ENCODE measurements at regions of chr6 and their contacts with region 1.

Region 1: GRCh38 chr6:150016324-150017185 is 8.8 kb downstream of the RAET1L start:
- DNase-seq: peak; percentile 84
- ATAC-seq: peak; percentile 79
- H3K4me3 ChIP-seq: no peak overlapping the region
- H3K27ac ChIP-seq: no peak overlapping the region
- H3K4me1 ChIP-seq: no peaks in the 10 kb centered on the region
- H3K27me3 ChIP-seq: no peaks in the 10 kb centered on the region
- CTCF ChIP-seq: peak; percentile 52; the same call in 1 of the 2 replicates

Region 2: DNA sequence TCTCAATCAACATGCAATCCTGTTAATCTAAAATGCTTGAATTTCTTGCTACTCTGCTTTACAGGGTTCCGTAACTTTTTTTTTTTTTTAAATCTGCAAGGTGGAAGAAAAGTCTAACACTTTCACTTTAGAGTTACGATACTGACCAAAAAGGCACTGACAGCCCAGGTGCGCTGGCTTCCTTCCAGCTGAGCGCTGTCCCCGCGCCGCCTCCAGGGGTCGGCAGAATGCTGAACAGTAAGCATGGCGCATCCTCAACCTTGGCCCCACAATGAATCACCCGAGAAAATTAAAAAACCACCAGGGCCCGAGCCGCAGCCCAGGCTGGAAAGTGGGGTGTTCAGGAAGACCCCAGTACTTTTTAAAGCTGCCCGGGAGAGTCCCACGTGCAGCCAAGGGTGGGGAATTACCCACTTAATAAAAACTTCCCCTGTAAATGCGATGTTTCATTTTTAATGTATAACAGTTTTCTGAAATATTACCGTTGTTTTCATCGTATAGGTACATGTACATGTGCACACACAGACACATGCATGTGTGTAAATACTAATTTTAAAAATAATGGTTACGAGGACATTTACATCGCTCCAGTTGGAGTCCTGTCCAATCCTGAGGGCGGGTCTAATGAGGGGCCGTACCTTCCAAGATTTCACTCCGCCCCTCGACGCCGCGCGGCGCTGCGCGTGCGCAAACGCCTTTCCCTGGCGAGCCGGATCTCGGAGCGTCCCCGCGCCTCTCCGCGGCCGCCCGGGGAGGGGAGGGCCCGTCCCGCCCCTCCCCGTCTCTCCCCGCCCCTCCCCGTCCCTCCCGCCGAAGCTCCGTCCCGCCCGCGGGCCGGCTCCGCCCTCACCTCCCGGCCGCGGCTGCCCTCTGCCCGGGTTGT is 450.8 kb before region 1 on chr6 and contains the start of gene GINM1:
- CTCF ChIA-PET with region 1: no interaction called
- POLR2A ChIA-PET with region 1: no interaction called
- intact Hi-C with region 1: loop called (anchors 5 kb)
- DNase-seq: peak; percentile 95
- ATAC-seq: peak; percentile 84
- H3K4me3 ChIP-seq: peak within 1 kb of the TSS; percentile 94
- H3K27ac ChIP-seq: peak within 1 kb of the TSS; percentile 37; the same call in 1 of the 2 replicates
- H3K4me1 ChIP-seq: peaks cover 26% of the 10 kb centered on the region
- H3K27me3 ChIP-seq: no peaks in the 10 kb centered on the region
- CTCF ChIP-seq: peak; percentile 71
- total RNA-seq, gene GINM1: 15.0 and 19.2 TPM in 2 replicates

Region 3: DNA sequence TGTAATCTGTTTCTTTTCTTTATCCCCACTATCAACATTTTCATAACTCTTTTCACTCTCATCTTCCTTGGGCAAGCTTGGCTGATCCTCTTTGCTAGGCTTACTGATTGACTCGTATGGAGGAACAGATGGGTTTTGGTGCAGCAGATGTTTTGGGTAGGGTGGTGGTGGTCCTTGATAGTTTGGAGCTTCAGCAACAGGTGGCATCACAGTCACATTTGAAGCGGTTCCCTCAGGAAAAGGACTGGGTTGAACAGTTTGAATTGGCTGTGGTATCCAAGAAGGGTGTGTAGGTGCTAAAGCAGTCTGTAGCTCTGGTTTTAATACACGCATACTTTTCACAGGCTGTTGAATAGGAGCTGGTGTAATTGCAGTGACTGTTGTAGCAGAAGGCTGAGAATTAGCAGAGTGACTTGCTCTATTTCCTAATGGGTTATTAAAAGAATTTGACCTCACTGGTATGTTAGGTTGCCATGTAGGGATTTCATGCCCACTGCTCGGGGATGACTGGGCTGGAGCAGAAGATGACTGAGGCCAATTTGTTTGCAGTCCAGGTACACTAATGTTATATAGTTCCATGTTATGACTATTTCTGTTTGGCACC is 333.2 kb before region 1 on chr6:
- CTCF ChIA-PET with region 1: no interaction called
- POLR2A ChIA-PET with region 1: no interaction called
- intact Hi-C with region 1: no loop called
- DNase-seq: no peak
- ATAC-seq: no peak
- H3K4me3 ChIP-seq: no peak overlapping the region
- H3K27ac ChIP-seq: no peak overlapping the region
- H3K4me1 ChIP-seq: no peaks in the 10 kb centered on the region
- H3K27me3 ChIP-seq: no peaks in the 10 kb centered on the region
- CTCF ChIP-seq: no peak

Region 4: GRCh38 chr6:149723771-149724417 is 292.7 kb before region 1 on chr6:
- CTCF ChIA-PET with region 1: no interaction called
- POLR2A ChIA-PET with region 1: no interaction called
- intact Hi-C with region 1: loop called (anchors 10 kb)
- DNase-seq: peak; percentile 76
- ATAC-seq: peak; percentile 98
- H3K4me3 ChIP-seq: no peak overlapping the region
- H3K27ac ChIP-seq: no peak overlapping the region
- H3K4me1 ChIP-seq: no peaks in the 10 kb centered on the region
- H3K27me3 ChIP-seq: no peaks in the 10 kb centered on the region
- CTCF ChIP-seq: peak; percentile 84

Region 5: GRCh38 chr6:149934249-149935156 is 82.1 kb before region 1 on chr6:
- CTCF ChIA-PET with region 1: no interaction called
- POLR2A ChIA-PET with region 1: no interaction called
- intact Hi-C with region 1: loop called (anchors 1 kb)
- DNase-seq: peak; percentile 83
- ATAC-seq: peak; percentile 25; the same call in 1 of the 2 replicates
- H3K4me3 ChIP-seq: no peak overlapping the region
- H3K27ac ChIP-seq: no peak overlapping the region
- H3K4me1 ChIP-seq: peaks cover 17% of the 10 kb centered on the region; the same call in 1 of the 2 replicates
- H3K27me3 ChIP-seq: no peaks in the 10 kb centered on the region
- CTCF ChIP-seq: peak; percentile 78

Measured in PC-3 (cell line).